Sigmoid colon (tissue), 7 donors: ENCODE measurements at regions of chr5 and their contacts with region 1.

Region 1: GRCh38 chr5:157265714-157266285 is at the start of gene CYFIP2:
- DNase-seq: peak; percentile 68
- H3K4me3 ChIP-seq: peak within 1 kb of the TSS; percentile 40 to 93 (median 74)
- H3K27ac ChIP-seq: peak within 1 kb of the TSS in 2 of 4 donors; percentile 33 to 34
- H3K4me1 ChIP-seq: peaks cover 0 to 13% (median 10%) of the 10 kb centered on the region in 4 donors
- H3K27me3 ChIP-seq: no peaks in the 10 kb centered on the region
- CTCF ChIP-seq: no peak
- EP300 ChIP-seq: no peak
- POLR2A ChIP-seq: no peak
- total RNA-seq, gene CYFIP2: 13.8 to 37.8 (median 29.3) TPM

Region 2: DNA sequence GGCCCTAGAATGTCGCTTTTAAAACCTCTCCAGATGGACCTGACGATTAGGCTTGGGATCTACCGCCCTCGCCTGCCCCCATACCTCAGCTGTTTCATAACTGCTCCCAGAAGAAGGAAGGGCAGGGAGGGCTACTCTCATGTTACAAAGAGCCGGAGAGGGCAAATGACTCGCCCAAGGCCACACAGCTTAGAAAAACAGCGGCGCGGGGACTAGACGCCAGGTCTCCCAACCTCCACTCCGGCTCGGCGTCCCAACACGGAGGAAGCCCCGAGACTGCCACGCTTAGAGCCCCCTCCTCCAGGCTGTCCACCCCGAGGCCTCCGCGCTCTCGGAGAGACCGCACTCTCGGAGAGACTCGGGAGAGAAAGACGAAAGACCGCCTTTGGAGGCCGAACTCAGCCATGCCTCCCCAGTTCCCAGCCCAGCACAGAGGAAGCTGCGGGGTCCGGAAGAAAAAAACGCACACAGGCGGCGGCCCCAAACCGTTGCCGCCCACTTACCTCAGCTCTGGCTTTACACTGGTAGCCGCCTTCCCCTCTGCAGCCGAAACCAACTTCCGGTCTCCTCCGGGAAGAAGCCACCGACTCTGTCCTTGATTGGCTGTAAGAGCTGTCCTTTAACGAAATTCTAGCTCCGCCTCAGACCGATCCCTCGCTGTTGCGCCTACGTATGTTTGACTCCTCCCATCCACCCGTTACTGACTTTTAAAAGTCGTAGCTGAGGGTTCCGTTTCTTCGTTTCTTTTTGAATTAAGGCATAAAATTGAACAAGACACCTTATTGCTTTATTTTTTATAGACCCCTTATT is 123.3 kb before region 1 on chr5 and contains the start of gene MED7:
- intact Hi-C with region 1: loop called (anchors 5 kb)
- DNase-seq: peak; percentile 98
- H3K4me3 ChIP-seq: peak within 1 kb of the TSS; percentile 86 to 92 (median 88)
- H3K27ac ChIP-seq: peak within 1 kb of the TSS; percentile 90 to 94 (median 90)
- H3K4me1 ChIP-seq: peaks cover 0 to 24% (median 14%) of the 10 kb centered on the region in 4 donors
- H3K27me3 ChIP-seq: no peaks in the 10 kb centered on the region
- CTCF ChIP-seq: no peak
- EP300 ChIP-seq: no peak
- POLR2A ChIP-seq: peak; percentile 53 to 85
- total RNA-seq, gene MED7: 9.7 to 15.1 (median 10.6) TPM